ENCODE measurements at regions of chr22 and their contacts with region 1.

Region 1: GRCh38 chr22:30253205-30253852 is 6.8 kb upstream of the LIF start:
- DNase-seq: peak in 9 of 10 donors; percentile 29 to 80 (median 66)
- H3K4me3 ChIP-seq: peak overlapping the region in 23 of 59 donors; percentile 4 to 45 (median 23)
- H3K27ac ChIP-seq: peak overlapping the region in 20 of 59 donors; percentile 4 to 68 (median 38)
- H3K27me3 ChIP-seq: peaks cover 0 to 8% (median 0%) of the 10 kb centered on the region in 45 donors
- CTCF ChIP-seq: peak in 1 of 56 donors; percentile 2

Region 2: GRCh38 chr22:30104501-30105156 is 148.7 kb before region 1 on chr22:
- intact Hi-C with region 1: loop called (anchors 1 to 2 kb)
- DNase-seq: no peak
- H3K4me3 ChIP-seq: no peak overlapping the region
- H3K27ac ChIP-seq: no peak overlapping the region
- H3K27me3 ChIP-seq: no peaks in the 10 kb centered on the region
- CTCF ChIP-seq: no peak

Region 3: GRCh38 chr22:30208631-30209603 is 44.4 kb before region 1 on chr22:
- intact Hi-C with region 1: loop called in 1 of 2 experiments (anchors 2 kb)
- DNase-seq: peak in 2 of 10 donors; percentile 22 to 31
- H3K4me3 ChIP-seq: no peak overlapping the region
- H3K27ac ChIP-seq: peak overlapping the region in 31 of 59 donors; percentile 2 to 73 (median 30)
- H3K27me3 ChIP-seq: no peaks in the 10 kb centered on the region
- CTCF ChIP-seq: no peak

Region 4: DNA sequence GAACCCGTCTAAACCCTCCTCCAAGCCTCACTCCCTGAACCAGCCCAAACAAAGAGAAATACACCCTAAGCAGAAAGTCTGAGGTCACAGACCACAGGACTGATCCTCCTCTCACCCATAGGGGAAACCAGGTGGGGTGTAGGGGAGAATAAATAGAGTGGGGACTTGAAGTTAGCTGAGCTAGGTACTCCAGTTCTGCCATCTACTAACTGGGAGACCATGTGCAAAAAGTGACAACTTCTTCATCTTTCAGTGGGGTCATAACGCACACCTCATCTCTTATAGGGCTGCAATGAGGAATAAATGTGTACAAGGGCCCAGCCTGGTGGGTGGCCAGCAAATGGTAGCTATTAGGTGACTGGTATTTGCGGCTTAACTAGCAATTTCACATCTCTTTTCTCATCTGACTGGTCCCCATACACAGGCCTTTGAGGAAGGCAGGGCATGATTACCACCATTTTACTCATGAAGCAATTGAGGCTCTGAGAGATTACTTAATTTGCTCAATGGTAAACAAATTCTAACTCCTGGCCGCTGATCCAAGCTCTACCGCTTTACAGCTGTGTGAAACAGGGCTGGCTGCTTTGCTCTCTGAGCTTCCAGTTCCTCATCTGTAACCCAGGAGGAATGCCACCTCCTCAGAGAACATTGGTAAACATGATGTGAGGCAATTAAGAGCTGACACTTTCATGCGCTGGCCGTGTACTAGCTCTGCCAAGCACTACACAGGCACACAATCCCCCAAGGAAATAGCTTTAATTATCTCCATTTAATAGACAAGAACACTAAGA is 56.8 kb after region 1 on chr22:
- intact Hi-C with region 1: no loop called
- DNase-seq: no peak
- H3K4me3 ChIP-seq: no peak overlapping the region
- H3K27ac ChIP-seq: peak overlapping the region in 38 of 59 donors; percentile 3 to 73 (median 49)
- H3K27me3 ChIP-seq: no peaks in the 10 kb centered on the region
- CTCF ChIP-seq: no peak

Measured in dorsolateral prefrontal cortex (tissue), 120 donors.